Activated B cell treated with CpG ODN at 0.5 μM for 24 hours (primary cell): ENCODE measurements at regions of chr3 and their contacts with region 1.

Region 1: GRCh38 chr3:128617557-128618397 is 32.8 kb downstream of the RPN1 start:
- DNase-seq: peak; percentile 96
- ATAC-seq: peak; percentile 96
- H3K4me3 Mint-ChIP-seq: peak overlapping the region; percentile 91
- H3K27ac Mint-ChIP-seq: peak overlapping the region; percentile 88
- H3K4me1 Mint-ChIP-seq: peaks cover 23% of the 10 kb centered on the region
- H3K27me3 Mint-ChIP-seq: no peaks in the 10 kb centered on the region
- CTCF ChIP-seq: peak; percentile 94

Region 2: DNA sequence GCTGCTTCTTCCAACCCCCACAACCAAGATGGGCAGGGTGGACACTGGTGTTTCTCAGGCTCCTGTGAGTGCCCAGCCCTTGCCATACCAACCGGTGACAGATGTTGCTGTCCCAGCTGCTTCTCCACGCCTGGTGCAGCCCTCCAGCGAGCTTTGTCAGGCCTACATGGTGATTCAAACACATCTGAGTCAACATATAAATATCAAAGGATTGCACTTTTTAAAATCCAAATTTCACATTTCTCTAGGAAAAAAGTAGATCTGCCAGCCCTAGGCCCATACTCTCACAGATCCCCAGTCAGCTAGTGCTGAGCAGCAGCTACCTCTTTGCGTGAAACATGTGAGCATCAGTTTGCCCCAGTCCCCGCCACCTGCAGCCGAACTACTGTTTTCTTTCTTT is 19.9 kb before region 1 on chr3:
- CTCF ChIA-PET with region 1: no interaction called
- POLR2A ChIA-PET with region 1: no interaction called
- intact Hi-C with region 1: no loop called
- DNase-seq: no peak
- ATAC-seq: no peak
- H3K4me3 Mint-ChIP-seq: no peak overlapping the region
- H3K27ac Mint-ChIP-seq: no peak overlapping the region
- H3K4me1 Mint-ChIP-seq: no peaks in the 10 kb centered on the region
- H3K27me3 Mint-ChIP-seq: no peaks in the 10 kb centered on the region
- CTCF ChIP-seq: no peak

Region 3: DNA sequence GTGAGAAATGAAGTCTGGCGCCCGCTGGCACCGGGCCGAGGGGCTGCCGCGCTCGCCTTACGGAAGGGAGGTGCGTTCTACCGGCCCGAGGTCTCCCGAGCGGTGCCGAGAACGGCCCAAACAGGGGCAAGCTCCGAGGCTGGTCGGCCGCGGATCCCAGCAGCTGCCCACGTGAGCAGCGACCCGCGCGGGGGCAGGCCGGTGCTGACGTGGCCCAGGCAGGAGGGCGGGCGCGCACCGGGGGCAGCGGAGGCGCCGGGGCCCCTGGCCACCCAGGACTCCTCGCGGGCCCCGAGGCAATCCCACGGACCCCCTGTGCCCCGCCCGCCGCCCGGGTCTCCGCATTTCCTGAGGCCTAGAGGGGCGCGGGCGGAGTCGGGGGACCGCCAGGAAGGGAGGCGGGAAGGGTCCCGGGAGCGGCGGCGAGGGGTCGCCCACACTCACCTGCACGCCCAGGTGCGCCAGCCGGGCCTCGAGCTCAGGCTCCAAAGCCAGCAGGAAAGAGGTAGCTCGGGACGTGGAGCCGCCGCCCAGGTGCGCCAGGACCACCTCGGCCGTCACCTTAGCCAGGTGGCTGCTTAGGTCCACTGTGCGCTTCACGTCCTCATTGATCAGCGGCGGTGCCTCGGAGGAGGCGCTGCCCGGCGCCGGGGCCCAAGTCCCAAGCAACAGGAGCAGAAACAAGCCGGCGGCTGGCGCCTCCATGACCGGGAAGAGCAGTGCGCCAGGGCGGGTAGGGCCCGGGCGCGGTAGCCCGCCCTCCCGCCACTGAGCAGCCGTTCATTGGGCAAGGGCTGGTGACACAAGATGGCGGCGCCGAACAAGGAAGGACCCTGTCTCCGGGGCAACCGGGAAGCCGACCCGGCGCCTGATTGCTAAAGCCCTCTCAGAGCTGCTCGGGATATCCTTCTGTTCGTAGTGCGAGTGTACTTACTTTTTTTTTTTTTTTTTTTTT is 32.6 kb after region 1 on chr3 and contains the start of gene RPN1:
- CTCF ChIA-PET with region 1: interaction called, 5 read pairs
- POLR2A ChIA-PET with region 1: interaction called, 21 read pairs
- intact Hi-C with region 1: loop called (anchors 1 kb)
- DNase-seq: peak; percentile 90
- ATAC-seq: peak; percentile 97
- H3K4me3 Mint-ChIP-seq: peak within 1 kb of the TSS; percentile 89
- H3K27ac Mint-ChIP-seq: peak within 1 kb of the TSS; percentile 86
- H3K4me1 Mint-ChIP-seq: peaks cover 41% of the 10 kb centered on the region
- H3K27me3 Mint-ChIP-seq: no peaks in the 10 kb centered on the region
- CTCF ChIP-seq: no peak
- total RNA-seq, gene RPN1: 93.4 and 95.2 TPM in 2 replicates

Region 4: DNA sequence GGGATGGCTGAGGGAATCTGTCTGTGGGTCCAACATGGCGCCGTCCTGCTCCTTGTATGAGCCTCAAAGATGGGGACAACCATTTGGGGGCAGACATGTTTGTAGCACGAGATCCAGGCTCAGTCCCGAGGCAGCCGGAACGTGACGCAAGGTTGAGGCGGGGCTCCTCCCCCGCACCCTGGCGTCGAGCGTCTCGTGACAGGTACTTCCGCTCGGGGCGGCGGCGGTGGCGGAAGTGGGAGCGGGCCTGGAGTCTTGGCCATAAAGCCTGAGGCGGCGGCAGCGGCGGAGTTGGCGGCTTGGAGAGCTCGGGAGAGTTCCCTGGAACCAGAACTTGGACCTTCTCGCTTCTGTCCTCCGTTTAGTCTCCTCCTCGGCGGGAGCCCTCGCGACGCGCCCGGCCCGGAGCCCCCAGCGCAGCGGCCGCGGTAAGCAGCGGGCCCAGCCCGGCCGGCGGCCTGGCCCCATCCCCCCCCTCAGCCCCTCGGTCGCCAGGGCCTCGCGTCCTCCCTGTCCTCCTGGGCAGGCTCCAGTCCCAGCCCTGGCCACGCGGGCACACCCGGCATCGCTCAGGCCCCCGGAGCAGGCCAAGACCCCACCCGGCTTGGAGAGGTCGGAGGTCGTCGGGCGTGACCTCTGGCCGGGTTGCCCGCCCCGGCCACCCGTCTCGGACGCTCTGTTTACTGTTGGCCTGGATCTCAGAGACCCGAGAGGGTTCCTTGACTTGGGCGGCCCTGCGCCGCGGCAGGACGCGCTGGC is 108.3 kb after region 1 on chr3 and contains the start of gene RAB7A:
- CTCF ChIA-PET with region 1: interaction called, 4 read pairs
- POLR2A ChIA-PET with region 1: interaction called, 3 read pairs
- intact Hi-C with region 1: loop called (anchors 1 kb)
- DNase-seq: peak; percentile 93
- ATAC-seq: peak; percentile 94
- H3K4me3 Mint-ChIP-seq: peak within 1 kb of the TSS; percentile 93
- H3K27ac Mint-ChIP-seq: peak within 1 kb of the TSS; percentile 91
- H3K4me1 Mint-ChIP-seq: peaks cover 61% of the 10 kb centered on the region
- H3K27me3 Mint-ChIP-seq: peaks cover 7% of the 10 kb centered on the region
- CTCF ChIP-seq: no peak
- total RNA-seq, gene RAB7A: 169 and 190 TPM in 2 replicates

Region 5: DNA sequence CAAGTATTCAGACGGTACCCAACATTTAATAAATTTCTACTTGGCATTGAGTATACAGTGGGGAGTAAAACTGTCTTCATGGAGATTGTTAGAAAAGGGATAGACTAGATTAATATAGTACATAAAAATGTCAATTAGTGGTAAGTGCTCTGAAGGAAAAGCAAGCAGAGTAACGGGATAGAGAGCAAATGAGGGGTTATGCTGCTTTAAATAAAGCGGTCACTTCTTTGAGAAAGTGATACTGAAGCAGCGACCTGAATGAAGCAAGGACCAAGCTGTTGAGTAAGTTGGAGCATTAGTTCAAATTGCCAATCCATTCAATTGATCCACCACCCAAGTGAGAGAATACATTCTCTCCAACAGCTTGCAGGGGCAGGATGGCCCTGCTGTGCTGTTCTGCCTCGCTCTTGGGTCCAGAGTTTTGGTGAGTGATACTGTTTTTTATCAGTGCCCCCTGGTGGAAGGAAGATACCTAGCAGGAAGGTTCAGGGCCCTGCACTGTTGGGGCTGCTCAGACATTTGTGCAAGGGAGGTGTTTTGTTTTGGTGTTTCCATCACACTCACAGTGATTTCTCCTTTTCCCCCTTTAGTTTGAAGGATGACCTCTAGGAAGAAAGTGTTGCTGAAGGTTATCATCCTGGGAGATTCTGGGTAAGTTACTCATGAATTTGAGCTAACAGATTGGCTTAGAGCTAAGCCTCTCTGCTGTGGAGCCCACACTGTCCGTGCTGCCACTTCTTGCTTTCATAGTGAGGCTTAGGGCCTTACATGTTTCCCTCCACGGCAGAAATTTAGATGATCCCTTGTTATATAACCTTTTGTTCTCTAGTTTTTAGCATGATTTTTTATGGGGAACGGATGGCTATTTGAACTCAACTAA is 177.2 kb after region 1 on chr3:
- CTCF ChIA-PET with region 1: interaction called, 17 read pairs
- POLR2A ChIA-PET with region 1: interaction called, 5 read pairs
- intact Hi-C with region 1: loop called (anchors 1 kb)
- DNase-seq: no peak
- ATAC-seq: peak; percentile 100
- H3K4me3 Mint-ChIP-seq: no peak overlapping the region
- H3K27ac Mint-ChIP-seq: peak overlapping the region; percentile 30
- H3K4me1 Mint-ChIP-seq: peaks cover 50% of the 10 kb centered on the region
- H3K27me3 Mint-ChIP-seq: no peaks in the 10 kb centered on the region
- CTCF ChIP-seq: no peak

Region 6: GRCh38 chr3:128804017-128804810 is 186.4 kb after region 1 on chr3:
- CTCF ChIA-PET with region 1: interaction called, 4 read pairs
- POLR2A ChIA-PET with region 1: interaction called, 3 read pairs
- intact Hi-C with region 1: loop called (anchors 1 kb)
- DNase-seq: no peak
- ATAC-seq: peak; percentile 94
- H3K4me3 Mint-ChIP-seq: peak overlapping the region; percentile 55
- H3K27ac Mint-ChIP-seq: peak overlapping the region; percentile 83
- H3K4me1 Mint-ChIP-seq: peaks cover 54% of the 10 kb centered on the region
- H3K27me3 Mint-ChIP-seq: no peaks in the 10 kb centered on the region
- CTCF ChIP-seq: no peak

Region 7: GRCh38 chr3:128845778-128846485 is 228.2 kb after region 1 on chr3:
- CTCF ChIA-PET with region 1: interaction called, 4 read pairs
- POLR2A ChIA-PET with region 1: no interaction called
- intact Hi-C with region 1: loop called (anchors 1 kb)
- DNase-seq: peak; percentile 72
- ATAC-seq: peak; percentile 87
- H3K4me3 Mint-ChIP-seq: peak overlapping the region; percentile 88
- H3K27ac Mint-ChIP-seq: peak overlapping the region; percentile 36
- H3K4me1 Mint-ChIP-seq: peaks cover 10% of the 10 kb centered on the region
- H3K27me3 Mint-ChIP-seq: no peaks in the 10 kb centered on the region
- CTCF ChIP-seq: no peak

Region 8: GRCh38 chr3:128895843-128896697 is 278.3 kb after region 1 on chr3:
- CTCF ChIA-PET with region 1: no interaction called
- POLR2A ChIA-PET with region 1: no interaction called
- intact Hi-C with region 1: no loop called
- DNase-seq: no peak
- ATAC-seq: no peak
- H3K4me3 Mint-ChIP-seq: no peak overlapping the region
- H3K27ac Mint-ChIP-seq: no peak overlapping the region
- H3K4me1 Mint-ChIP-seq: no peaks in the 10 kb centered on the region
- H3K27me3 Mint-ChIP-seq: no peaks in the 10 kb centered on the region
- CTCF ChIP-seq: no peak

Region 9: DNA sequence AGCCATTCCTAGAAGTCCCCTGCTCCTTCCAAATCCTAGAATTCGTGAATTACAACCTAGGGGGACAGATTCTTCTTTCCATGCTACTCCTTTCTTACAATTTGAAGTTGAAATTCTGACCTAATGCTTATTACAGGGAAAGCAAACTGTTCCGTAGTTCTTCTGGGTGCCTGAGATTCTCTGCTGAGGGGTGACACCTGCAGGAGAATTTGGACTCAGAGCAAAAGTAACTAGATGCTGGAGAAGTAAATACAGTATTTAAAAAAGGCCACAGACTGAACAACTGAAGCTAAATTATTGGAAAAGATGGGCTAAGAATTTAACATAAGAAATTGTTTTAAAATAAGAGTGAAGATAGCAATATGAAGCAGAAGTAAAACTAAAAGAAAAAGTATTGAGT is 299.5 kb after region 1 on chr3:
- CTCF ChIA-PET with region 1: no interaction called
- POLR2A ChIA-PET with region 1: no interaction called
- intact Hi-C with region 1: loop called (anchors 1 kb)
- DNase-seq: no peak
- ATAC-seq: no peak
- H3K4me3 Mint-ChIP-seq: no peak overlapping the region
- H3K27ac Mint-ChIP-seq: peak overlapping the region; percentile 6
- H3K4me1 Mint-ChIP-seq: peaks cover 5% of the 10 kb centered on the region
- H3K27me3 Mint-ChIP-seq: no peaks in the 10 kb centered on the region
- CTCF ChIP-seq: no peak

Region 10: DNA sequence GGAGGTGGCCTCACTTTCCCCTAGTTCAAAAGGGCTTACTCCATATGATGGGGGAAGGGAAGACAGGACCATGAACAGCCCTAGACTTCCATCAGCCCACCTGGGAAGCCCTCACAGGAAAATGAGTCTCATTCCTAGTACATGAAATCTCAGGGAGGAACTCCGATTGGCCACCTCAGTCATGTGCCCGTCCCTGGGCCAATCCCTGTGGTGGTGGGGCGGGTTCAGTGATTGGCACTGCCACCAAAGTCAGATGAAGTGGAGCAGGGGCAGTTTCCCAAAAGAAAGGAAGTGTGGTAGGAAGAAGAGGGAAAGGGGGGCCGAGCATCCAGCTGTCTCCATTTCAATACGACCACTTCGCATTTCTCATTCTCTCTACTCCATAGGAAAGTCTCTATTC is 416.9 kb after region 1 on chr3:
- CTCF ChIA-PET with region 1: no interaction called
- POLR2A ChIA-PET with region 1: no interaction called
- intact Hi-C with region 1: no loop called
- DNase-seq: no peak
- ATAC-seq: no peak
- H3K4me3 Mint-ChIP-seq: no peak overlapping the region
- H3K27ac Mint-ChIP-seq: no peak overlapping the region
- H3K4me1 Mint-ChIP-seq: no peaks in the 10 kb centered on the region
- H3K27me3 Mint-ChIP-seq: peaks cover 13% of the 10 kb centered on the region
- CTCF ChIP-seq: no peak

Region 11: DNA sequence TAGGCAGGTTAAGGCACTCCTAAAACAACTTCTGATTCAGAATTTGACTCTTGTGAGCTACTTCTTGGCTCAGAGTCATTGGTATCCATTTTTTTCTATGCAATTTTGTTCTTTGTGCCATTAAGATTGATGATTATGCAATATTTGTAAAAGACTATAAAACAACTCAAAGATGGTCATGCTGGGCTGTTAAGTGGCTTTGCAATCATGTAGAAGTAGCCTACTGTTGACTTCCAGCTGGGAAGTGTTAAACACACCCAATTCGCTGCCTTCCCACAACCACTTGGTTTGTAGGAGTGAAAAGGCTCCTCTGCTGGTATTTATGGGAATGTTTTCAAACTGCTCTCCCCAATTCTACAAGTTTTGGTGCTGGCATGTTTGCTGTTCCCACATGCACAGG is 1824.5 kb after region 1 on chr3:
- CTCF ChIA-PET with region 1: no interaction called
- POLR2A ChIA-PET with region 1: no interaction called
- intact Hi-C with region 1: no loop called
- DNase-seq: no peak
- ATAC-seq: no peak
- H3K4me3 Mint-ChIP-seq: no peak overlapping the region
- H3K27ac Mint-ChIP-seq: no peak overlapping the region
- H3K4me1 Mint-ChIP-seq: no peaks in the 10 kb centered on the region
- H3K27me3 Mint-ChIP-seq: no peaks in the 10 kb centered on the region
- CTCF ChIP-seq: no peak